HepG2 (cell line): ENCODE measurements at regions of chr19 and their contacts with region 1.

Region 1: GRCh38 chr19:53879140-53880081 is 2.6 kb upstream of the PRKCG start:
- DNase-seq: peak; percentile 86
- ATAC-seq: peak; percentile 88
- H3K4me3 ChIP-seq: peak overlapping the region; percentile 64 to 84 (median 68)
- H3K27ac ChIP-seq: no peak overlapping the region
- H3K4me1 ChIP-seq: peaks cover 30% of the 10 kb centered on the region
- H3K27me3 ChIP-seq: peaks cover 0 to 28% of the 10 kb centered on the region in 2 experiments; a peak in 3 of 5 replicates
- CTCF ChIP-seq: no peak
- EP300 ChIP-seq: no peak
- POLR2A ChIP-seq: no peak
- RAD21 ChIP-seq: no peak

Region 2: DNA sequence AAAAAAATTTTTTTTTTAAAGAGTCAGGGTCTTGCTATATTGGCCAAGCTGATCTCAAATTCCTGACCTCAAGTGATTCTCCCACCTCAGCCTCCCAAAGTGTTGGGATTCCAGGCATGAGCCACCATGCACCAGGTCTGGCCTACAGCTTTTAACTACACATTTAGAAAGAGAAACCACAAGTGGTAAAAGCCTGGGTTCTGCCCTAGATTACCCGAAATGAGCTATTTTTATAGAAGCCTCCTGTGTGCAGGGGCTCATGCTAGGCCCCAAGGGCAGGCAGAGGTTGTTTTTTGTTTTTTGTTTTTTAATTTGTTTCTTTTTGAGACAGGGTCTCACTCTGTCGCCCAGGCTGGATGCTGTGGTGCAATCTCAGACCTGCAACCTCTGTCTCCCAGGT is 25.7 kb before region 1 on chr19:
- CTCF ChIA-PET with region 1: interaction called, 20 read pairs
- POLR2A ChIA-PET with region 1: interaction called, 4 read pairs
- in situ Hi-C with region 1: no loop called
- intact Hi-C with region 1: no loop called
- DNase-seq: no peak
- ATAC-seq: no peak
- H3K4me3 ChIP-seq: no peak overlapping the region
- H3K27ac ChIP-seq: no peak overlapping the region
- H3K4me1 ChIP-seq: peaks cover 22% of the 10 kb centered on the region
- H3K27me3 ChIP-seq: peaks cover 0 to 3% of the 10 kb centered on the region in 2 experiments; a peak in 2 of 5 replicates
- CTCF ChIP-seq: no peak
- EP300 ChIP-seq: no peak
- POLR2A ChIP-seq: no peak
- RAD21 ChIP-seq: no peak

Region 3: DNA sequence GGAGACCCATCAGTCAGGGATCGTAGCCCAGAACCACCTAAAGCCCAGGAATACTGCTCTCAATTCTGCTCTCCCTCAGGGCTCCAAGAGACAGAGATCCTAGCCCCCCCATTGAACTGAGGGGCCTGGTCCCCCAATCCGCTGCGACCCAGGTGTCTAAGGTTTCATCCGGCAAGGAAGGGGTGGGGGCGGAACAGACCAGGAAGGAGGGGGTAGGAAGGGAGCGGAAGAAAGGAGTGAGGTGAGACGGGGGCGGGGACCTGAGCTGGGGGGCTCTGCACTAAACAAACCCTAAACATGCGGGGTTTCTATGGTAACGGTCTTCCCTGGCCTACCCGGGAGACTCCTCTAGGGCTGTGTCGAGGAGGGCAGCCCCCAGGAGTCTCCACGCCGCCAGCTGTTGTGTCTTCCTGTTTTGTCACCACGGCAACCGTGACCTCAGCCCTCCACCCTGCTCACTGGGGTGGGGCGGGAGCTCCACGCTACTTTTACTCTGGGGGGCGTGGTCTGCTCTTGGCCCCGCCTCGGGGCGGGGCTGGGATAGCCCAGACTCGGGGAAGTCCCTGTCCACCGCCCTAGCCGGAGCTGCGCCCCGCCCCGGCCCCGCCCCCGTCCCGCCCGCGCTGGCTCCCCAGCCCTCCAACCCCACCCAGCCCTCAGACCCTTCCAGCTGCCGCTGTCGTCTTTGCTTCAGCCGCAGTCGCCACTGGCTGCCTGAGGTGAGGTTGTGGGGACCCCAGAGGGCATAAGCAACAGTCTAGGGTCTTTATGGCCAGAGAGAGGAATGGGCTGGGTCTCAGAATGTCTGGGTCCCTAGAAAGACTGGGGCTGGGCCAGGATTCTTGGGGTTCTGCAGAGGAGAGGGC is 12.0 kb before region 1 on chr19 and contains the start of gene MYADM:
- CTCF ChIA-PET with region 1: no interaction called
- POLR2A ChIA-PET with region 1: interaction called, 102 read pairs
- in situ Hi-C with region 1: no loop called
- intact Hi-C with region 1: loop called (anchors 1 kb)
- DNase-seq: peak; percentile 98
- ATAC-seq: peak; percentile 33
- H3K4me3 ChIP-seq: peak within 1 kb of the TSS; percentile 79 to 99 (median 99)
- H3K27ac ChIP-seq: peak within 1 kb of the TSS; percentile 100
- H3K4me1 ChIP-seq: peaks cover 32% of the 10 kb centered on the region
- H3K27me3 ChIP-seq: no peaks in the 10 kb centered on the region; a peak in 1 of 5 replicates
- CTCF ChIP-seq: no peak; the same call in 1 of the 2 replicates
- EP300 ChIP-seq: peak; percentile 73 to 90
- POLR2A ChIP-seq: peak; percentile 83 to 89
- RAD21 ChIP-seq: no peak; the same call in 1 of the 2 replicates
- total RNA-seq, gene MYADM: 12.4 and 19.9 TPM in 2 replicates

Region 4: DNA sequence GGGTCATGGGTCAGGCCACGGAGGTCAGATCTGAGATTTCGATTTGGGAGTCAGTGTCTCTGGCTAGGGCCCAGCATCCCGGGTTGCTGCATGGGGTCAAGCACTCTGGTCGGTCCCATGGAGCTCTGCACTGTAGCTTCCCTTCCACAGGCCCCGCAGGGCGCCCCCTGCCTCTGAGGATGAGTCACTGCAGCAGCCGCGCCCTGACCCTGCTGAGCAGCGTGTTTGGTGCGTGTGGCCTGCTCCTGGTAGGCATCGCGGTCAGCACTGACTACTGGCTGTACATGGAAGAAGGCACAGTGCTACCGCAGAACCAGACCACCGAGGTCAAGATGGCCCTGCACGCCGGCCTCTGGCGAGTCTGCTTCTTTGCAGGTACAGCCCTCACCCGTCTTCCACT is 33.2 kb after region 1 on chr19:
- CTCF ChIA-PET with region 1: no interaction called
- POLR2A ChIA-PET with region 1: no interaction called
- in situ Hi-C with region 1: no loop called
- intact Hi-C with region 1: no loop called
- DNase-seq: no peak
- ATAC-seq: peak; percentile 68
- H3K4me3 ChIP-seq: no peak overlapping the region
- H3K27ac ChIP-seq: no peak overlapping the region
- H3K4me1 ChIP-seq: no peaks in the 10 kb centered on the region
- H3K27me3 ChIP-seq: peaks cover 12 to 36% of the 10 kb centered on the region in 2 experiments
- CTCF ChIP-seq: peak; percentile 69
- EP300 ChIP-seq: no peak
- POLR2A ChIP-seq: no peak
- RAD21 ChIP-seq: no peak